Activated CD8-positive, alpha-beta memory T cell treated with anti-CD3 and anti-CD28 coated beads, Interleukin-2, amount 10 ng/mL, durations not matched to agents 7 days and 5 days (primary cell): ENCODE measurements at regions of chr17 and their contacts with region 1.

Region 1: DNA sequence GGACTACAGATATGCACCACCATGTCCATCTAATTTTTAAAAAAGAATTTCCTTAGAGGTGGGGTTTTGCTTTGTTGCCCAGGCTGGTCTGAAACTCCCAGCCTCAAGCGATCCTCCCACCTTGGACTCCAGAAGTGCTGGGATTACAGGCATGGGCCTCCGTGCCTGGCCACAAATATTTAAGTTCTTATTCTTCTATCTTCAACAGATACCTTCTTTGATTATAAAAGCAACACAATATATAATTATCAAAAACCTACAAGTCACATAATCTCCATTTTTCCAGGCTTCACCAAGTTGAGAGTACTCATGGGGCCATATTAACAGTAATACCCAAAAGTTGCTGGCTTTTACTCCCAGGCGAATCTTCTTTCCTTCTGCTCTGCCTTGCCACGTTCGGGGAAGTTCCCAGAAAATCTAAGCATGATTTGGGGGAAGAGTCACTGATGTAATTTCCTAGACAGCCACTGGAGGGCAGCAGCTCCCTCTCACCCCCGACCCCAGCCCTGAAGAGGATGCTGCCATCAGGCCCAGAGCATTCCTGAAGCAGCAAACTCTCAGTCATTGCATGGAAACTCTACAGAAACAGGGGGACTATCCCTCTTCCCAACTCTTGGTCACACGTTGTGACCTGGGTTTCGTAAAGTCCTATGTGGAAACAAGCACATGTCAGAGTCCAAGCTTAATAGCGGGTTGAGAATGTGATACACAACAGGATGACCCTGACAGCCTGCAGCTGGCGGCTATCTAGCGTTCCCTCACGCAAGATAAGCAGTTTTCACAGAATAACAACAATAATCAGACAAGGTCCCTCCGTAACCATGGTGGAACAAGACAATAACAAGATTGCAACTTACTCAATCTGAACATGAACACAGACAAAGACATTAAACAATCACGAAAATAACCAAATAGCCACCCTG is 43.9 kb upstream of the DHX40 start:
- DNase-seq: peak; percentile 64
- ATAC-seq: peak; percentile 57
- H3K4me3 Mint-ChIP-seq: no peak overlapping the region
- H3K27ac Mint-ChIP-seq: no peak overlapping the region
- H3K4me1 Mint-ChIP-seq: peaks cover 6% of the 10 kb centered on the region
- H3K27me3 Mint-ChIP-seq: peaks cover 32% of the 10 kb centered on the region

Region 2: DNA sequence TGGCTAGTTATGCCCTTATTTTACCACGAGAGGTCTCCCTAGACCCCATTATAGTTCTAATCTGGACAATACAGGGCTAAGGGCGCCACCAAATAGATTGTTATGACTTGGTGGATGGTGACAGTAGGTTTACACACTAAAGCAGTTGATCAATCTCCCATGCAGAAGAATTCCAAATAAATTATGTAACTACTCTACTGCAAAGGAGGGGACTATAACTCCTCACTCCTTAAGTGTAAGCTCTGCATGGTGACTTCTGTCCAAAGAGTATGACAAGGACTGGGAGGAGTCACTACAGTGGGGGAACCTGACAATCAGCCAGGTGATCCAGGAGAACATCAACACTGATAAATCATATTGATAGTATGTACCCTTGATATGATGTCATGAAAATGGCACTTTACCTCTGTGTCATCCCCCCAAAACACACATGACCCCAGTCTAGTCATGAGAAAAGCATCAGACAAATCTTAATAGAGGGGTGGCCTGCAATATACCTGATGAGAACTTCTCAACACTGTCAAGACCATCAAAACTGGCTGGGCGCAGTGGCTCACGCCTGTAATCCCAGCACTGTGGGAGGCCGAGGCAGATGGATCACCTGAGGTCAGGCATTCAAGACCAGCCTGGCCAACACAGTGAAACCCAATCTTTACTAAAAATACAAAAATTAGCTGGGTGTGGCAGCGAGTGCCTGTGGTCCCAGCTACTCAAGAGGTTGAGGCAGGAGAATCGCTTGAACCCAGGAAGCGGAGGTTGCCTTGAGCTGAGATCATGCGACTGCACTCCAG is 210.1 kb before region 1 on chr17:
- CTCF ChIA-PET with region 1: interaction called, 19 read pairs
- DNase-seq: peak; percentile 66
- ATAC-seq: peak; percentile 96
- H3K4me3 Mint-ChIP-seq: no peak overlapping the region
- H3K27ac Mint-ChIP-seq: peak overlapping the region; percentile 25
- H3K4me1 Mint-ChIP-seq: peaks cover 8% of the 10 kb centered on the region
- H3K27me3 Mint-ChIP-seq: no peaks in the 10 kb centered on the region

Region 3: DNA sequence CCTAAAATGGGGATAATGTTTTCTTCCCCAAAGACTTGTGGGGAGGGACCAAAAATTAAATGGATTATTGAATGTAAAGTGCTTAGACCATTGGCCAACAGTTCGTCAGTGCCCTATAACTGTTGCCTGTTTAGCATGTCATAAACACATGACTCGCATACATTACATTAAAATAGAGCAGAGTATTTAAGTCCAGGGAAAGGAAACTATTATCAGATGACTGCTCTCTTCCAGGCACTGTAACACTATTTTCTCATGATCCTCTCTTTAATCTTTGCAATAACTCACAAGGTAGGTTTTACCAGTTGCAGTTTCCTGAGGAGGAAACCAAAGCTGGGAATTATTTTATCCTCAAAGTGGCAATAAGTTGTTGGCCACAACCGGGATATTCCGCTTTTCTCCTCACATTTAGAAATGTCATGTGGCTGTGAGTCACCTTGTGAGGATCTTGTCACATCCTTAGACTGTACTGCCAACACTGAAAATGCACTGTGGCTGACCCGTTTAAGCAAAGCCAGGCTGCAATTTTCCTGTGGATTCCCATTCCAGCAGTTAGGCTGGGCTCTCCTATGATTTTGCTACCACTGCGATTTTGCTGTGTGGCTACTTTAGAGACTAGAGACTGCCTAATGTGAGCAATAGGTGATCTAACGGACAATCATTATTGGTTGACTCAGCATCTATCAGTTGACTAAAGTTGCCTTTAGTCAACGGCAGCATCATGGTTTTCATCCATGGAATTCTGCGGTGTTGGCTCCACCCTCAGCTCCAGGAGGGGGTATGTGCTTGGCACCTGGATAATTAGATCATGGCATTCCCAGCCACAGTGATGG is 14.4 kb before region 1 on chr17:
- CTCF ChIA-PET with region 1: interaction called, 16 read pairs
- DNase-seq: no peak
- ATAC-seq: no peak
- H3K4me3 Mint-ChIP-seq: no peak overlapping the region
- H3K27ac Mint-ChIP-seq: no peak overlapping the region
- H3K4me1 Mint-ChIP-seq: peaks cover 3% of the 10 kb centered on the region
- H3K27me3 Mint-ChIP-seq: peaks cover 3% of the 10 kb centered on the region

Region 4: GRCh38 chr17:59651346-59651745 is 129.9 kb after region 1 on chr17:
- CTCF ChIA-PET with region 1: no interaction called
- DNase-seq: no peak
- ATAC-seq: peak; percentile 87
- H3K4me3 Mint-ChIP-seq: no peak overlapping the region
- H3K27ac Mint-ChIP-seq: no peak overlapping the region
- H3K4me1 Mint-ChIP-seq: peaks cover 24% of the 10 kb centered on the region
- H3K27me3 Mint-ChIP-seq: no peaks in the 10 kb centered on the region